Activated CD4-positive, alpha-beta memory T cell treated with anti-CD3 and anti-CD28 coated beads, Interleukin-2, amount 10 ng/mL, durations not matched to agents 7 days and 5 days (primary cell): ENCODE measurements at regions of chr20 and their contacts with region 1.

Region 1: DNA sequence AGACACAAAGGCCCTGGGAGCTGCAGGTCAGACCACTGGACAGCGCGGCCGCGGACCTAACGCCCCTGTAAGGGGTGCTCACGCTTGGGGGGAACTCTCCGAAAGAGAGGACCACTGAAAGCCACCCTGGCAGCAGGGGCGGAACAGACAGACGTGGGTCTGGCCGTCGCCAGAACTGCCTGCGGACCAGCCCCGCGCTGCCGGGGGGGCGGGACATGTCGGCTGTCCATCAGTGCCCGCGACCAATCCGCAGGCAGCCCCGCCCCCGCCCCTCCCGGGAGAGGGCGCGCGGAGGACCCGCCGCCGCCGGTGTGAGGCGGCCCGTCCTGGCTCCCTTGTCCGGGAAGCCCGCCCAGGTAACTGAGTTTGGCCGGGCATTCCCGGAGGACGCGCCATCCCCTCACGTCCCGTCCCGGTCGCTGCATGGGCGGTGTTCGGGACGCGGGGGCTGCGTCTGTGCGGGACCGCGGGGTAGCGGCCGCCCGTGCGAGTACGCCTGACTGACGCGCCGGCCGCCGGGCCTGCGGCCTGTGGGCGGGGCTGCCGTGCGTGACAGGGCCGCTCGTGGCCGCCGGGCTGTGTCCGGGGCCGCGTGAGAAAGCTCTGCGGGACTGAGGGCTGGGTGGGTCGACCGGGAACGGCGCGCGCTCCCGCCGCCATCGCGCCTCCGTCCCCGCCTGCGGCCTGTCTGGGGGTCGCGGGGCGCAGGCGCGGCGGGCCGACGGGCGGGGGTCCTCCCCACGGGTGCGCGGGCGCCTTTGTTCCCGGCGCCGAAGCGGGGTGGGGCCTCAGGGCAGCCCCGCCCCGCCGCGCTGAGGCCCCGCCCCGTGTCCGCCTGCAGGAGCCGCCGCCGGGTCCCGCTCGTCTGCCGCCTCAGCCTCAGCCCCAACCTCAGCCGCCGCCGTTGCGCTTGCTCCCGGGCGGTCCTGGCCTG is at the start of gene PLCG1:
- DNase-seq: peak; percentile 86
- H3K4me3 Mint-ChIP-seq: peak within 1 kb of the TSS; percentile 86
- H3K27ac Mint-ChIP-seq: peak within 1 kb of the TSS; percentile 90
- H3K4me1 Mint-ChIP-seq: peaks cover 57% of the 10 kb centered on the region
- H3K27me3 Mint-ChIP-seq: no peaks in the 10 kb centered on the region
- total RNA-seq, gene PLCG1: 267 to 286 TPM

Region 2: GRCh38 chr20:40908309-40908708 is 228.6 kb before region 1 on chr20:
- CTCF ChIA-PET with region 1: no interaction called
- POLR2A ChIA-PET with region 1: no interaction called
- DNase-seq: no peak
- H3K4me3 Mint-ChIP-seq: no peak overlapping the region
- H3K27ac Mint-ChIP-seq: no peak overlapping the region
- H3K4me1 Mint-ChIP-seq: no peaks in the 10 kb centered on the region
- H3K27me3 Mint-ChIP-seq: no peaks in the 10 kb centered on the region

Region 3: GRCh38 chr20:41119546-41120235 is 17.3 kb before region 1 on chr20:
- CTCF ChIA-PET with region 1: interaction called, 23 read pairs
- POLR2A ChIA-PET with region 1: no interaction called
- DNase-seq: no peak
- H3K4me3 Mint-ChIP-seq: no peak overlapping the region
- H3K27ac Mint-ChIP-seq: no peak overlapping the region
- H3K4me1 Mint-ChIP-seq: peaks cover 18% of the 10 kb centered on the region
- H3K27me3 Mint-ChIP-seq: no peaks in the 10 kb centered on the region

Region 4: GRCh38 chr20:41155261-41155660 is 18.3 kb after region 1 on chr20:
- CTCF ChIA-PET with region 1: interaction called, 72 read pairs
- POLR2A ChIA-PET with region 1: interaction called, 466 read pairs
- DNase-seq: no peak
- H3K4me3 Mint-ChIP-seq: no peak overlapping the region
- H3K27ac Mint-ChIP-seq: peak overlapping the region; percentile 97
- H3K4me1 Mint-ChIP-seq: peaks cover 98% of the 10 kb centered on the region
- H3K27me3 Mint-ChIP-seq: no peaks in the 10 kb centered on the region

Region 5: GRCh38 chr20:41173161-41173721 is 36.3 kb after region 1 on chr20:
- CTCF ChIA-PET with region 1: interaction called, 26 read pairs
- POLR2A ChIA-PET with region 1: interaction called, 12 read pairs
- DNase-seq: peak; percentile 60
- H3K4me3 Mint-ChIP-seq: no peak overlapping the region
- H3K27ac Mint-ChIP-seq: peak overlapping the region; percentile 35
- H3K4me1 Mint-ChIP-seq: peaks cover 12% of the 10 kb centered on the region
- H3K27me3 Mint-ChIP-seq: no peaks in the 10 kb centered on the region

Region 6: GRCh38 chr20:41339507-41340326 is 202.8 kb after region 1 on chr20:
- CTCF ChIA-PET with region 1: interaction called, 51 read pairs
- POLR2A ChIA-PET with region 1: interaction called, 5 read pairs
- DNase-seq: peak; percentile 86
- H3K4me3 Mint-ChIP-seq: peak overlapping the region; percentile 62
- H3K27ac Mint-ChIP-seq: no peak overlapping the region
- H3K4me1 Mint-ChIP-seq: peaks cover 12% of the 10 kb centered on the region
- H3K27me3 Mint-ChIP-seq: peaks cover 5% of the 10 kb centered on the region

Region 7: DNA sequence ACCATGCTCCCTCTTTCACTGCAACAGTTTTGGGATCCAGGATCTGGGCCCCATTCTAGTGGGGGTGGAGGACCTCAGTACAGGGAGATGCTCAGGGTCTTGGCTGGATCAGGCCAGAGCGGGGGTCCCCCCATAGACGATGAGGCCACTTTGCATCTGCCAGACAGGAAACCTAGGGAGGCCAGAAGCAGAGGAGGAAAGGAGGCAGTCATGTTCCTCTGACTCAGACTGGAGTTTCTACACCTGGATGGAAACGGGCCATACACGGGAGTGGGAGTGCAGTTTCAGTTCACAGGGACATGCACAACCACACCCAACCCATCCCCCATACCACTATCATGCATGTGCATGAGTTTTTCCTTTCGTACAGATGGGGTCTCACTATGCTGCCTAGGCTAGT is 233.2 kb after region 1 on chr20:
- CTCF ChIA-PET with region 1: no interaction called
- POLR2A ChIA-PET with region 1: no interaction called
- DNase-seq: no peak
- H3K4me3 Mint-ChIP-seq: no peak overlapping the region
- H3K27ac Mint-ChIP-seq: no peak overlapping the region
- H3K4me1 Mint-ChIP-seq: peaks cover 3% of the 10 kb centered on the region
- H3K27me3 Mint-ChIP-seq: peaks cover 28% of the 10 kb centered on the region